ENCODE measurements at regions of chr2 and their contacts with region 1.

Region 1: DNA sequence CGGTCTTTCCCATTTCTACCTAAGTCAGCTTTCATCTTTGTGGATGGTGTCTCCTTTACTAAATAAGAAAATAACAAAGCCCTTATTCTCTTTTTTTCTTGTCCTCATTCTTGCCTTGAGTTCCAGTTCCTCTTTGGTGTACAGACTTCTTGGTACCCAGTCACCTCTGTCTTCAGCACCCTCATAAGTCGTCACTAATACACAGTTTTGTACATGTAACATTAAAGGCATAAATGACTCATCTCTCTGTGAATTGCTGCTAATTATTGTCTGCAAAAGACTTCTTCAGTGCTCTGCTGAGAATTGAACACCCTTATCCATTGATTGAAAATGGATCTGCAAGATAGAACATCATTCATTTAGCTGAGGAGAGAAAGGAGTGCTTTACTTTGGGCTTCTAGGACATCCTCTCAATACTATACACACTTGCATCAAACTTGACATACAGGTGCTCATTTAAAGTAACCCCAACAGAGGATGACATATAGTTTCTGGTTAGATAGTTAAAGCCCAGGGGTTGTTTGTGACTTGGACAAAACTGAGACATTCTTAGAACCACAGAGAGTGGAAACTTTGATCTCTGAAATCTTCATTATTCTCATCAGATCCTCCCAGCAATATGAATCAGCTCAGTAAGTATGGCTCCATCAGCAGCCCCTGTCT is 97.0 kb downstream of the XRCC5 start:
- DNase-seq: no peak
- ATAC-seq: no peak
- H3K4me3 ChIP-seq: no peak overlapping the region
- H3K27ac ChIP-seq: no peak overlapping the region
- H3K4me1 ChIP-seq: peaks cover 0 to 2% of the 10 kb centered on the region in 2 experiments; a peak in 2 of 5 replicates
- H3K27me3 ChIP-seq: no peaks in the 10 kb centered on the region
- CTCF ChIP-seq: no peak
- EP300 ChIP-seq: no peak
- POLR2A ChIP-seq: no peak
- RAD21 ChIP-seq: no peak

Region 2: DNA sequence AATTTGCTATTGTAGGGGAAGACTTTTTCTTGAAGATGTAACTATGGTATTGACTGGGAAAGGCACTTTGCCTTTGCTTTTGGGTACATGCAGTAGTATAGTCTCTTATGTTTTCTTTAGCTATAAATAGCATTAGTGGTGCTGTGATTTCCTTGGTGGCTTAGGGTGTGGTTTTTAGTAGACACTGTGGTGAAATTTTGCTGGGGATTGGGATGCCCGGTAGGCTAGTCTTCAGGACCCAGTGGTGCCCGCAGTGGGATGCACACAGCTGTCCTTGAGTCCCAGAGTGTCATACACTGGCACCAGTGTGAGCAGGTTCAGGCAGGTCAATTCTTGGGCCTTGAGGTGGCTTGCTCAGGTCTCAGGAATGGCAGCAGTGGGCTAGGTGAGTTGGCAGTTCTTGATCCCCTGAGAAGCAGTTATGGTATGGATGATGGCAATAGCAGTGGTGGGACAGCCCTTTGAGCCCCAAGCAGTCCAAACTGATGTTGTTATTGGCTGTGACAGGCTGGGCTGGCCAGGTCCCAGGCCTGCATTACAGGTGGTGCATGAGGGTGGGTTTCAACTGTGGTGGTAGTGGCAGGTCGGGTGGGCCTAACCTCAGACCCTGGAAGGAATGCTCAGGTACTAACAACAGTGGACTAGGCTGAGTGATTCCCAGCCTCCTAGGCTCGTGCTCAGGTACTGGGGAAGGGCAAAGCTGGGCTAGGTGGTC is 27.3 kb after region 1 on chr2:
- CTCF ChIA-PET with region 1: no interaction called
- POLR2A ChIA-PET with region 1: no interaction called
- in situ Hi-C with region 1: no loop called
- intact Hi-C with region 1: no loop called
- DNase-seq: no peak
- ATAC-seq: no peak
- H3K4me3 ChIP-seq: no peak overlapping the region
- H3K27ac ChIP-seq: no peak overlapping the region
- H3K4me1 ChIP-seq: no peaks in the 10 kb centered on the region
- H3K27me3 ChIP-seq: no peaks in the 10 kb centered on the region
- CTCF ChIP-seq: no peak
- EP300 ChIP-seq: no peak
- POLR2A ChIP-seq: no peak
- RAD21 ChIP-seq: no peak

Region 3: GRCh38 chr2:217585362-217585761 is 1379.2 kb after region 1 on chr2:
- CTCF ChIA-PET with region 1: no interaction called
- POLR2A ChIA-PET with region 1: no interaction called
- in situ Hi-C with region 1: loop called (anchors 10 kb)
- intact Hi-C with region 1: no loop called
- DNase-seq: no peak
- ATAC-seq: no peak
- H3K4me3 ChIP-seq: no peak overlapping the region
- H3K27ac ChIP-seq: no peak overlapping the region
- H3K4me1 ChIP-seq: no peaks in the 10 kb centered on the region
- H3K27me3 ChIP-seq: no peaks in the 10 kb centered on the region
- CTCF ChIP-seq: no peak
- EP300 ChIP-seq: no peak
- POLR2A ChIP-seq: no peak
- RAD21 ChIP-seq: no peak